GM10248 (cell line): ENCODE measurements at regions of chr14 and their contacts with region 1.

Region 1: DNA sequence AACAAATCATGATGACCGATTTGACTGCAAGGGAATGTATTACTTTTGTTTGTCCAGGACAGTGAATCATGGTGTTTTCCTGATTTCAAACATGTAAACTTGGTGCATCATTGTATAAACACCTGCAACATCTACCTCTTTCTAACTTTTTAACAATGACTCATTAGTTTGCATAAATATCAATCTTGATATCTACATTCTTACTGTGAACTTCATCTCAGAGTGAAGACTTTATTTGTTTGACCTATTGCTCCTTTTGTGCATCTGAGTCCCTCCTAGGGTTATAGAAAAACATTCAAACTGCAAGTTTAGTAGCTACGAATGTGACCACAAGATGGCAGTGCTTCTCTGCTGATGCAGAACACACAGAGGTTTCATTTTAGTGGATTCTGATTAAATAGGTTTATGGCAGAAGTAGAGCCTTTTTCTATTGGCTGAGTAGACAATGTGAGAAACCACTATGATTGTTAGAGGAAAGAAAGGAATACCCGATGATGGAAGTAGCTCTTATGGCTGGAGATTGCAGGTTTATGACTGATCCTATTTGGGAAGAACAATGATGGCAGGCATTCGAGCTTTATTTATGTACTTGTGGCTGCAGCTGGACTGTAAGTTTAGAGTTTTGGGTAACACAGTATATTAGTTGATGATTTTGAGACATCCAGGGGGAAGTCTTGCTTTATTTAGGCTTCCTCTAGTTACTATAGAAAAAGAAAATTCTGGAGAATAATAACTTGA is 244.2 kb upstream of the OR4E1 start:
- DNase-seq: peak; percentile 17
- CTCF ChIP-seq: peak; percentile 90

Region 2: GRCh38 chr14:21419528-21419927 is 498.3 kb before region 1 on chr14:
- CTCF ChIA-PET with region 1: no interaction called
- POLR2A ChIA-PET with region 1: no interaction called
- DNase-seq: no peak
- CTCF ChIP-seq: no peak

Region 3: DNA sequence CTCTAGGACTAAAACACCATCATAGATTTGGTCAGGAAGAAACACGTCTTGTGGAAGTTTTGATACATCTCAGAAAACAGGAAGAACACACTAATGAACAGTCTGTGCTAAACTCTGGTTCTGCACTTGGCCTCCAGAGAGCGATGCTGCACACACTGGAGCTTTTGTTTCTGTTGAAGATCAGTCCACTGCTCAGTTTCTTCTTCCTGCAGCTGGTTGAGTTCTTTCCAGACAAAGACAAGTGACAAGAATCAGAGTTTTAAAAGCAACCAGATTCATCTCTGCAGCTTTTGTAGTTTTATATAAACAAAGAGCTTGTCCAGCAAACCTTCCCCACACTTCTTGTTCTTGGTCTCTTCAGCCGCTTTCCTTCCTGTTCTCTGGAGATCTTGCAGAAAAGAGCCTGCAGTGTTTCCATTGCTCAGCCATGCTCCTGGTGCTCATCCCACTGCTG is 15.2 kb before region 1 on chr14:
- CTCF ChIA-PET with region 1: interaction called, 19 read pairs
- POLR2A ChIA-PET with region 1: no interaction called
- DNase-seq: no peak
- CTCF ChIP-seq: peak; percentile 23